Head of caudate nucleus (tissue), 42 donors: ENCODE measurements at regions of chr10 and their contacts with region 1.

Region 1: GRCh38 chr10:122461367-122461728 is at the start of gene HTRA1:
- DNase-seq: peak; percentile 65 to 96 (median 89)

Region 2: GRCh38 chr10:122504610-122504950 is 43.2 kb after region 1 on chr10:
- intact Hi-C with region 1: loop called (anchors 5 kb)
- DNase-seq: peak; percentile 85 to 97 (median 93)